ENCODE measurements at regions of chr1 and their contacts with region 1.

Region 1: GRCh38 chr1:228734881-228735801 is at the start of gene RHOU:
- DNase-seq: peak; percentile 64
- H3K4me3 Mint-ChIP-seq: peak within 1 kb of the TSS; percentile 75
- H3K27ac Mint-ChIP-seq: no peak within 1 kb of the TSS
- H3K4me1 Mint-ChIP-seq: peaks cover 3% of the 10 kb centered on the region
- H3K27me3 Mint-ChIP-seq: peaks cover 5% of the 10 kb centered on the region
- total RNA-seq, gene RHOU: 0.17 to 0.35 TPM

Region 2: DNA sequence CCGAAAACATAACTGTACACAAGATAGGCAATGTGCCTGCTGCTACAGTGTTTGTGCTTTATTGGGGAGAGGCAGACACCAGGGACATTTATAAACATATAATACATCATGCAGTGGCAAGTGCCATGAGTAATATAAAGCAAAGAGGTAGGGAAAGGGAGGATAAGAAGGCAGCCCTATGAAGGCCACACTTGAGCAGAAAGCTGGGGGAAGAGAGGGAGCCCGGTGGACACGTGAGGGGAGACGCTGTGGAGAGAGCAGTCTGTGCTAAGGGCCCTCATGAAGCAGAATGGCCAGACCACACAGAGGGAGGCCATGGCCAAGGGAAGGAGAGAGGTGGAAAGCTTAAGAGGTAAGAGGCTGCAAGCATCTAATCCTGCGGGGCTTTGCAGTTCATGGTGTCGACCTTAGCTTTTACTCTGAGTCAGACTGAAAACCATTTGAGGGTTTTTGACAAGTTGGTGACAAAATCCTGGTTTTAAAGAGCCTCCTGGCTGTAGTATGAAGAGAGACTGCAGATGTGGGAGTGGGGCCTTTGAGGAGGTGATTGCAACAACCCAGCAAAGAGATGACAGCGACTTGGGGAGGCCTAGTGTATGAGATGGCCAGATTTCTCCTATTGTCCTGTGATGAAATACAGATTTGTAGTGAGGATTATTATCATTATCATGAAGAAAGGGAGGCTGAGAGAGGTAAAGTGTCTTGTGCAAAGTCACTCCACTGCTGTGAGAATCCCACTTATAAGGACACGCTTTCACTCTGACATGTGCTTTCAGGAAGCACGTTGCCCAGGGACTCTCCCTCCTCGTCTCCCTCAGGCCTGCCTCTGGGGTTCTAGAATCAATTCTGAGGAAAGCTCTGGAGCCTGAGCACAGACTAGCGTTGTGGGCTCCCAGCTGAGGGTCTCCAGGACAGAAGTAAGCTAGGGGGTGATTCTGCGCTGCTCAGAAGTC is 193.1 kb after region 1 on chr1:
- CTCF ChIA-PET with region 1: interaction called, 3 read pairs
- intact Hi-C with region 1: loop called (anchors 5 kb)
- DNase-seq: peak; percentile 18
- H3K4me3 Mint-ChIP-seq: no peak overlapping the region
- H3K27ac Mint-ChIP-seq: no peak overlapping the region
- H3K4me1 Mint-ChIP-seq: peaks cover 9% of the 10 kb centered on the region
- H3K27me3 Mint-ChIP-seq: no peaks in the 10 kb centered on the region

Region 3: DNA sequence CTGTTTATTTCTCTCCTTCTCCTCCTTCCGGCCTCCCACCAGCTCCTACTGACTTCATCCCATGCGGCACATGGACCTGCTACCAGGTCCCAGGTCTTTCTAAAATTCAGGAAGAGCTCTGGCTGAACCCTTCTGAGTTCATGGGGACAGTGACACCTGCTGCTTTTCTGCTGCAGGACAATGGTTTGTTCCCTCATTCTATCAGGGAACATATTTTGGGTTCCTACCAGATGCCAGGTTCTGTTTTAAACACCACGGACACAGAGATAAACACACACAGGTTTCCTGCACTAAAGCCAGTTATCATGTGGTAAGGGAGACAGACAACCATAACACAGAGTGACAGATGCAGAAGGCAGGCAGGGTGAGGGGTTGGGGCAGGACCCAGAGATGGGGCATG is 421.7 kb after region 1 on chr1:
- CTCF ChIA-PET with region 1: interaction called, 4 read pairs
- intact Hi-C with region 1: loop called (anchors 5 kb)
- DNase-seq: no peak
- H3K4me3 Mint-ChIP-seq: no peak overlapping the region
- H3K27ac Mint-ChIP-seq: no peak overlapping the region
- H3K4me1 Mint-ChIP-seq: peaks cover 21% of the 10 kb centered on the region
- H3K27me3 Mint-ChIP-seq: no peaks in the 10 kb centered on the region

Measured in activated naive CD4-positive, alpha-beta T cell treated with anti-CD3 and anti-CD28 coated beads for 36 hours (primary cell).